PC-9 (cell line): ENCODE measurements at regions of chrX and their contacts with region 1.

Region 1: DNA sequence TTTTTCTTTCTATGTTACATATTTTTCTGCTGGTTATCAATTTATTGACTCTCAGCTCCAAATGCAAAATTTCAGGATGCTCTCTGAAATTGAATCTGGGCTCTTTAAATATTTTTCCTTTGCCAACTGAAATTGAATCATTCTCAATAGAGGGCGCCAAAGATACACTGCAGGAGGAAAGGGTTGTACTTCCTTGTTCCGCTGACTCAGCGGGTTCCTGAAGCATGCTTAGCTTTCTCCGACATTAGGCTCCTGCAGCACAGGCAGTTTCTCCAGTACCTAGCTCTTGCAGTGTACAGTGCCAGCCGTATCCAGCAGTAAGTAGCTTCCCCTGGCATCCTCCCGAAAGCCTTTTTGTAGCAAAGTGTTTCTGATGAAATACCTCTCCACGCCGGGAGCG is 28.8 kb upstream of the CFAP47 start:
- DNase-seq: peak; percentile 14 to 43
- H3K4me3 ChIP-seq: no peak overlapping the region
- H3K27ac ChIP-seq: no peak overlapping the region
- H3K4me1 ChIP-seq: no peaks in the 10 kb centered on the region
- H3K27me3 ChIP-seq: no peaks in the 10 kb centered on the region
- CTCF ChIP-seq: peak; percentile 72

Region 2: DNA sequence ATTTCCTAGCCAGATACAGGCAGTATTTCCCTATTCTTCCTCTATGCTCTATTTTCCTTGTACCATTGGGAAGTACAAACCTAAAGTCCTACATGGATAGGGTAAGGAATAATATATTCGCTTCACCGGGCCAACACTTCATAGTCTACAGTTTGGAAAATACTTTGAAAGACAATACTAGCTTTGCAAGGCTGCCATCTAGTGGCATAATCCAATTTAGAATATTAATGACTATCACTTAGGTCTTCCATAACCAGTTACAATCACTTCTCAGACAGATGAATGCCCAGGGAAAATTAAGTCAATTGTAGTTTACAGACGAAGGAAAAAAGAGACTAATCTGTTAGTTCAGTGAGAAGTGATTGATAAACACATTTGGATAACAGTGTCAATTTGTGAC is 976.4 kb after region 1 on chrX:
- CTCF ChIA-PET with region 1: no interaction called
- POLR2A ChIA-PET with region 1: no interaction called
- intact Hi-C with region 1: loop called (anchors 1 kb)
- DNase-seq: no peak
- H3K4me3 ChIP-seq: no peak overlapping the region
- H3K27ac ChIP-seq: no peak overlapping the region
- H3K4me1 ChIP-seq: no peaks in the 10 kb centered on the region
- H3K27me3 ChIP-seq: no peaks in the 10 kb centered on the region
- CTCF ChIP-seq: peak; percentile 66